AG04449 (cell line): ENCODE measurements at regions of chr2 and their contacts with region 1.

Region 1: GRCh38 chr2:168118733-168119514 is 128.5 kb downstream of the STK39 start:
- DNase-seq: peak; percentile 51
- H3K4me3 ChIP-seq: no peak overlapping the region
- CTCF ChIP-seq: peak; percentile 44

Region 2: GRCh38 chr2:166539340-166540162 is 1579.4 kb before region 1 on chr2:
- CTCF ChIA-PET with region 1: interaction called, 10 read pairs
- POLR2A ChIA-PET with region 1: no interaction called
- DNase-seq: no peak
- H3K4me3 ChIP-seq: no peak overlapping the region; the same call in 1 of the 2 replicates
- CTCF ChIP-seq: peak; percentile 67

Region 3: DNA sequence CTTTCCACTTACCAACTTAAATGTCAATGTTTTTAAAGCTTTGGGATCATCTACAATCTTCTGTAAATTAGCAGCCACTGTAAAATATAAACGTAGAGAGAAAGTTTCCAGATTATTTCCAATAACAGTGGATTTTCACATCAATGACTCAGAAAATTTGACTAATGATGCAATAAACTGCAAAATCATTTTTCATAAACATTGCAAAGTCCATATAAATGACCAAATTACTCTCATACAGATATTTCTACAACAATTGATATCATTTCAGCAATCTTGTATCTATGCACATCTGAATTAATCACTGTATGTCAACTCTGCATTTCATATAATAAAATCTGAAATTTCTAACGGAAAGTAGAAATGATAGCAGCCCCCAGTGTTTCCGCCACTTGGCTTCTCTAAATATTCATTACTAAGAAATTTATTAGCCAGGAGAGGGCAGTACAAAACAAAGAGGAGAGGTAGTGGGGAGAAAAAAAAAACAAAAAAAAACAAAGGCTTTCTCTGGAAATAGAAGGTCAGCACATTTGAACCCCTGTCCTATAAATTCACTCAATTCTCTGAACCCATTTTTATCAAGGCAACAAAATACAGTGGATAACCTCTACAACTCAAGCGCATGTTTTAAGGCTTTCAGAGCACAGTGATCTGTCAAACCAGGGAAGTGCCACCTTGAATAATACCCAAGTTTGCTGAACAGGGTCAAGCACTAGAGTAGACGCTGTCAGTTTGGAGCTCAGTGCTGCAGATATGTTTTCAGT is 154.1 kb before region 1 on chr2:
- CTCF ChIA-PET with region 1: interaction called, 276 read pairs
- POLR2A ChIA-PET with region 1: no interaction called
- DNase-seq: no peak
- H3K4me3 ChIP-seq: no peak overlapping the region
- CTCF ChIP-seq: no peak

Region 4: DNA sequence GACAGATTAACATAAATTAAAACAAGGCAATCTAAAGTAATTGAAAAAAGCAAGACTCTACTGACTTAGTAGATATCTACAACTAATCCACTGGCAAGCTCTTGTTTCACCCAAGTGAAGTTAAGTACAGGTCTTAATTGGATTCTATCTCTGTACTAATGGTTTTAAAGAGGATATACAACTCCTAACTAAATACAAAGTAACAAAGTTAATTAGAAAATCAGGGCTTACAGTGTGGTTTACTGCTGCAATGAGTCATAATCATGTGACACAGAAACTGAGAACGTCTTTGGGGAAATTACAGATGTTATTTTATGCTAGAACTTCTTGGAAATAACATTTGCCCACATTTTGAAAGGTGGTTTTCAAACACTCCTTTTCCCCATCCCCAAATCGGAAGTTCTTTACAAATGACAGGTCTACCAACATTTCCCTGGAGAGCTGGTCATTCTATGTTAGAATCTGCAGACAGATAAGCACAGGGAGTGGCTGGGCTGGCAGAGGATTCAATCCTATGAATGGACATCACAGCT is 116.8 kb before region 1 on chr2:
- CTCF ChIA-PET with region 1: interaction called, 10 read pairs
- POLR2A ChIA-PET with region 1: no interaction called
- DNase-seq: no peak
- H3K4me3 ChIP-seq: no peak overlapping the region
- CTCF ChIP-seq: no peak

Region 5: DNA sequence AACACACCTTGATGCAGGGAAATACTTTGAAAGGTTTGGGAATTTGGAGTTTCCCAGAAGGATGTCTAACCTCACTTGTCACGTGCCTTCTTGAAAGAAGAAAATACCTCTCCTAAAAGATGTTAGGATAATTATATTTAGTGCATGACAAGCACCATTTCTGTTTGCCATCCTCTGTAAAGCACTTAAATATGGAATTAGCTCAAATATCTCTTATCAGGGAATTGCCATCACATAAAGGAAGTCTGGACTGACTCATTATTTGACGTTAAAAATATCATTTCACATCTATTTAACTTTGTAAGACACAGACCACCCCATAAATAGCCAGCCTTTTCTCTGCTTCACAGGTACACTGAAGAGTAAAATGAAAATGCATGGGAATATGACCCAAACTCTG is 11.6 kb before region 1 on chr2:
- CTCF ChIA-PET with region 1: interaction called, 58 read pairs
- POLR2A ChIA-PET with region 1: no interaction called
- DNase-seq: no peak
- H3K4me3 ChIP-seq: no peak overlapping the region
- CTCF ChIP-seq: no peak

Region 6: GRCh38 chr2:168156661-168157060 is 37.7 kb after region 1 on chr2:
- CTCF ChIA-PET with region 1: interaction called, 11 read pairs
- POLR2A ChIA-PET with region 1: no interaction called
- DNase-seq: no peak
- H3K4me3 ChIP-seq: no peak overlapping the region
- CTCF ChIP-seq: no peak